ENCODE measurements at regions of chr1 and their contacts with region 1.

Region 1: GRCh38 chr1:50147191-50147850 is 38.6 kb downstream of the ELAVL4 start:
- DNase-seq: no peak
- H3K4me3 ChIP-seq: no peak overlapping the region
- H3K27ac ChIP-seq: no peak overlapping the region
- H3K4me1 ChIP-seq: no peaks in the 10 kb centered on the region
- H3K27me3 ChIP-seq: no peaks in the 10 kb centered on the region
- CTCF ChIP-seq: no peak
- POLR2A ChIP-seq: no peak

Region 2: DNA sequence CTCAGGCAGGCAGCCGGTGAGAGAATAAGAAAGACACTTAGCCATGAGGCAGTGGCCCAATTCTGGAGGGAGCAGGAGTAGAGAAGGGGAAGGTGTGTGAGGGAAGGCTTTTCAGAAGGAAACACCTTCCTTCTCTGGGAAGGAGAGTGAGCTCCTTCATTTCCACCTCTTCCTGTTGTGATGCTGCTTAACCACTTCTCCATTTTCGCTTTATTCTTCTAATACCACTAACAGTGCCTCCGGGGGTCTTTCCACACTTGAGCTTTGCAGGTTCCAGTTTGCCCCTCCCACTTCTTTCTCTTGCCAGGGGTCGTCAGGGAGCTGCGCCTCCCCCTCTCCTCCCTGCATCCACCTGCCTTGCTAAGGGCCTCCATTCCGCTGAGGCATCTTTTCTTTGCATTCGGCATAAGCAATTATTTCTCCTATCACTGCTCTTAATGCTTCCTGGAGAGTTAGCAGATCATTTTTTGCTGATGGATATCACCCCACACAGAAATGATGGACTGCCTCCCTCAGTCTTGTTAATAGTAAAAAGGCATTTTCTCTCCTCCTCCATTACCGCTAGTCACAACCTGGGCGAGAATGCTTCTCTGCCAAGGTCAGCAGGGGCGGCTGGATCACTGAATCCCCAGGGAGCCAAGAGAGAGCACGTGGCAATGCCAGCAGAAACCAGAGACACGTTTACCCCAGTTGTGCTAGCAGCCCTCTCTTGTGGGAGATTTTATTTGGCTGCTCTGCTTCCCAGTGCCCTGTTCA is 36.2 kb after region 1 on chr1:
- intact Hi-C with region 1: loop called (anchors 2 kb)
- DNase-seq: no peak
- H3K4me3 ChIP-seq: no peak overlapping the region
- H3K27ac ChIP-seq: no peak overlapping the region
- H3K4me1 ChIP-seq: no peaks in the 10 kb centered on the region
- H3K27me3 ChIP-seq: no peaks in the 10 kb centered on the region
- CTCF ChIP-seq: no peak
- POLR2A ChIP-seq: no peak

Measured in breast epithelium (tissue), 4 donors.